SK-N-SH (cell line): ENCODE measurements at regions of chr1 and their contacts with region 1.

Region 1: DNA sequence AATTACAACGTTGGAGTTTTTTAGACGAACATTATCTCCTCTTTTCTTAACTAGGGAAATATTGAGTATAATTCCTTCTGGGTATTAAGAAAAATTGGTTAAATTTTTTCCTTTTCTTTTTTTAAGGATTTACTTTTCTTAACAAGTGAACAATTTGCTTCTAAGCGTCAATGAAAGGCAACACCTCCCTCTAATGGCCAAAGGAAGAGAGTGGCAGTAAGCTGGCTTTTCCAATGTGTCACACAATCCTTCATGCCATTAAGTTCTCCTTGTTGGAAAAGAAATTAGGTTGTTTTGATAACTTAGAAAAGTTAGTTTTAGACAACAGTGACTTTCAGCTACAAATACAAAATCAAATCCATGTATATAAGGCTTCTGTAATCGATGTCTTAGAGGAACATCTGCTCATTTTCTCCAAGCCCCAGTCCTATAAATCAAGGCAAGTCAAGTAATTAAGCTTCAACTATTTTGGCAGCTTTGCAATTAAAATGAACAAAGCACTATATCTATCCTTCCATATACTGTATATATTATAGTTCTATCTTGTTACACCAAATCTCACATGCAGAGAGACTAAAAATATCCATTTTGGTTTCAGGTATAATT is 62.8 kb downstream of the EDEM3 start:
- DNase-seq: peak; percentile 36
- H3K4me3 ChIP-seq: no peak overlapping the region; a peak in 1 of 4 replicates
- H3K27ac ChIP-seq: no peak overlapping the region; a peak in 1 of 4 replicates
- H3K4me1 ChIP-seq: peaks cover 2 to 6% of the 10 kb centered on the region in 2 experiments; a peak in 2 of 4 replicates
- H3K27me3 ChIP-seq: no peaks in the 10 kb centered on the region
- CTCF ChIP-seq: peak; percentile 91
- EP300 ChIP-seq: no peak
- RAD21 ChIP-seq: peak; percentile 87

Region 2: GRCh38 chr1:184708084-184708676 is 16.4 kb after region 1 on chr1:
- CTCF ChIA-PET with region 1: interaction called, 34 read pairs
- POLR2A ChIA-PET with region 1: no interaction called
- DNase-seq: no peak
- H3K4me3 ChIP-seq: no peak overlapping the region
- H3K27ac ChIP-seq: no peak overlapping the region
- H3K4me1 ChIP-seq: no peaks in the 10 kb centered on the region; a peak in 1 of 4 replicates
- H3K27me3 ChIP-seq: no peaks in the 10 kb centered on the region
- CTCF ChIP-seq: no peak
- EP300 ChIP-seq: no peak
- RAD21 ChIP-seq: no peak

Region 3: DNA sequence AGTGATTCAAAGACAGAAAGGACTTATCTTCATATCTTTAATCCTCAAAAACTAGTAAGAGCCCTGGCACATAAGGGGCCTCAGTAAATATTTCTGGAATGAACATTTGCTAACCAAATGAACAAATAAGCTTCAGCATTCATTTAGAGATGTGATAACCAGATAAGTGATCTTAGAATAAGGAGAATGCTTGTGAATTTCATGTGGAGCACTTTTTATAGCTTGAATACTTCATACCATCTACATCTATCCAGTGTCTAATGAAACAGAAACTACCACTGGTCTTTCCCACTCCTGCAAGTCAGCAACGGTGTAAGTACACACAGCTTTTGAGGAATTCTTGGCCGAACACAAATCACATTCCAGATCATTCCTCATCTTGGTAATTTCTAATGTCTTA is 24.3 kb after region 1 on chr1:
- CTCF ChIA-PET with region 1: interaction called, 12 read pairs
- POLR2A ChIA-PET with region 1: no interaction called
- DNase-seq: no peak
- H3K4me3 ChIP-seq: no peak overlapping the region
- H3K27ac ChIP-seq: peak overlapping the region; percentile 7 to 65; a peak in 2 of 4 replicates
- H3K4me1 ChIP-seq: peaks cover 0 to 2% of the 10 kb centered on the region in 2 experiments; a peak in 1 of 4 replicates
- H3K27me3 ChIP-seq: no peaks in the 10 kb centered on the region
- CTCF ChIP-seq: no peak
- EP300 ChIP-seq: no peak
- RAD21 ChIP-seq: no peak